ENCODE measurements at regions of chr14 and their contacts with region 1.

Region 1: DNA sequence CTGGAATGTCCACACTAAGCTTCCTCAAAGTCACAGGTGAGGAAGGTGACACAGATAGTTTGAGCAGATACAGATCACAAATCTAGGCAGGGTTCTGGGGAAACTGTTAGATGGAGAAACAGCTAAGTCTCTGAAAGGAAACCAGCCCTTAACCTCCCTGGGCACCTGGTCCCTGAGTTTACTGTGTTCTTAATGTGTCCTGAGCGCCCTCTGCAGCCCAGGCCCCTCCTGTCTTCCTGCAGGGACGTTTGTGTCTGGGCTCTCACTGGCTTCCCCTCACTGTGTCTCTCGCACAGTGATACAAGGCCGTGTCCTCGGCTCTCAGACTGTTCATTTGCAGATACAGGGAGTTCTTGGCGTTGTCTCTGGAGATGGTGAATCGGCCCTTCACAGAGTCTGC is 684.3 kb downstream of the TMEM121 start:
- DNase-seq: peak in 1 of 5 donors; percentile 29
- H3K4me3 ChIP-seq: no peak overlapping the region
- H3K4me3 Mint-ChIP-seq: no peak overlapping the region
- H3K27ac ChIP-seq: no peak overlapping the region
- H3K27ac Mint-ChIP-seq: peak overlapping the region in 1 of 7 donors; percentile 58
- H3K4me1 ChIP-seq: no peaks in the 10 kb centered on the region
- H3K4me1 Mint-ChIP-seq: peaks cover 4 to 14% (median 6%) of the 10 kb centered on the region in 4 donors
- H3K27me3 ChIP-seq: no peaks in the 10 kb centered on the region
- H3K27me3 Mint-ChIP-seq: peaks cover 15 to 16% of the 10 kb centered on the region in 2 donors

Region 2: GRCh38 chr14:106120101-106120500 is 90.6 kb before region 1 on chr14:
- CTCF ChIA-PET with region 1: interaction called, 39 read pairs
- POLR2A ChIA-PET with region 1: interaction called, 4 read pairs
- intact Hi-C with region 1: no loop called
- DNase-seq: no peak
- H3K4me3 ChIP-seq: no peak overlapping the region
- H3K4me3 Mint-ChIP-seq: peak overlapping the region in 6 of 8 donors; percentile 13 to 71 (median 60)
- H3K27ac ChIP-seq: no peak overlapping the region
- H3K27ac Mint-ChIP-seq: peak overlapping the region in 3 of 7 donors; percentile 22 to 64 (median 37)
- H3K4me1 ChIP-seq: peaks cover 21% of the 10 kb centered on the region
- H3K4me1 Mint-ChIP-seq: peaks cover 15 to 44% (median 24%) of the 10 kb centered on the region in 4 donors
- H3K27me3 ChIP-seq: no peaks in the 10 kb centered on the region
- H3K27me3 Mint-ChIP-seq: peaks cover 13 to 17% of the 10 kb centered on the region in 2 donors

Region 3: DNA sequence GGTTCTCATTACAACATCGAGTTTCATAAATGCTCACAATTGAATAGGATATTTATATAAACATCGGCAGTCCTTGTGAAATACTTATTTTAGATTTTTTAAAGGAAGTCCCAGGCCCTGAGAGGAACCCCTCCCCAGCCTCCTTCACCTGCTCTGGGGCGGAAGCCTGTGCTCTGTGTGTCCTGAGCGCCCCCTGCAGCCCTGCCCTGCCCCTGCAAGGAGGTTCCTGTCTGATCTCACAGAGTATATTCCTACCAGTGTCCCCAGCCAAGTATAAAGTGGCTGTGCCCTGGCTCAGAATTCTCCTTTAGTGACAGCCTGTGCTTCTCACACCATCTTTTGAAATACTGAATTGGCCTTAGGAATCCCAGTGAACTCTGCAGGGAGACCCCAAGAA is 24.8 kb before region 1 on chr14:
- CTCF ChIA-PET with region 1: interaction called, 16 read pairs
- POLR2A ChIA-PET with region 1: interaction called, 6 read pairs
- intact Hi-C with region 1: no loop called
- DNase-seq: peak; percentile 70 to 77 (median 73)
- H3K4me3 ChIP-seq: no peak overlapping the region
- H3K4me3 Mint-ChIP-seq: peak overlapping the region in 7 of 8 donors; percentile 19 to 76 (median 58)
- H3K27ac ChIP-seq: peak overlapping the region; percentile 19
- H3K27ac Mint-ChIP-seq: peak overlapping the region; percentile 74 to 95 (median 90)
- H3K4me1 ChIP-seq: peaks cover 40% of the 10 kb centered on the region
- H3K4me1 Mint-ChIP-seq: peaks cover 28 to 54% (median 39%) of the 10 kb centered on the region in 4 donors
- H3K27me3 ChIP-seq: no peaks in the 10 kb centered on the region
- H3K27me3 Mint-ChIP-seq: no peaks in the 10 kb centered on the region

Region 4: GRCh38 chr14:106222731-106223130 is 12.1 kb after region 1 on chr14:
- CTCF ChIA-PET with region 1: interaction called, 127 read pairs
- POLR2A ChIA-PET with region 1: interaction called, 3 read pairs
- intact Hi-C with region 1: no loop called
- DNase-seq: no peak
- H3K4me3 ChIP-seq: no peak overlapping the region
- H3K4me3 Mint-ChIP-seq: peak overlapping the region in 7 of 8 donors; percentile 18 to 46 (median 30)
- H3K27ac ChIP-seq: no peak overlapping the region
- H3K27ac Mint-ChIP-seq: peak overlapping the region in 6 of 7 donors; percentile 33 to 92 (median 58)
- H3K4me1 ChIP-seq: peaks cover 27% of the 10 kb centered on the region
- H3K4me1 Mint-ChIP-seq: peaks cover 17 to 52% (median 34%) of the 10 kb centered on the region in 4 donors
- H3K27me3 ChIP-seq: no peaks in the 10 kb centered on the region
- H3K27me3 Mint-ChIP-seq: peaks cover 1 to 8% of the 10 kb centered on the region in 2 donors

Region 5: GRCh38 chr14:106228541-106229158 is 18.0 kb after region 1 on chr14:
- CTCF ChIA-PET with region 1: interaction called, 127 read pairs
- POLR2A ChIA-PET with region 1: interaction called, 5 read pairs
- intact Hi-C with region 1: no loop called
- DNase-seq: peak; percentile 42 to 62 (median 53)
- H3K4me3 ChIP-seq: peak overlapping the region; percentile 6 to 28
- H3K4me3 Mint-ChIP-seq: peak overlapping the region; percentile 68 to 90 (median 85)
- H3K27ac ChIP-seq: peak overlapping the region; percentile 47
- H3K27ac Mint-ChIP-seq: peak overlapping the region; percentile 68 to 96 (median 93)
- H3K4me1 ChIP-seq: peaks cover 44% of the 10 kb centered on the region
- H3K4me1 Mint-ChIP-seq: peaks cover 24 to 63% (median 47%) of the 10 kb centered on the region in 4 donors
- H3K27me3 ChIP-seq: no peaks in the 10 kb centered on the region
- H3K27me3 Mint-ChIP-seq: peaks cover 0 to 3% of the 10 kb centered on the region in 2 donors

Region 6: DNA sequence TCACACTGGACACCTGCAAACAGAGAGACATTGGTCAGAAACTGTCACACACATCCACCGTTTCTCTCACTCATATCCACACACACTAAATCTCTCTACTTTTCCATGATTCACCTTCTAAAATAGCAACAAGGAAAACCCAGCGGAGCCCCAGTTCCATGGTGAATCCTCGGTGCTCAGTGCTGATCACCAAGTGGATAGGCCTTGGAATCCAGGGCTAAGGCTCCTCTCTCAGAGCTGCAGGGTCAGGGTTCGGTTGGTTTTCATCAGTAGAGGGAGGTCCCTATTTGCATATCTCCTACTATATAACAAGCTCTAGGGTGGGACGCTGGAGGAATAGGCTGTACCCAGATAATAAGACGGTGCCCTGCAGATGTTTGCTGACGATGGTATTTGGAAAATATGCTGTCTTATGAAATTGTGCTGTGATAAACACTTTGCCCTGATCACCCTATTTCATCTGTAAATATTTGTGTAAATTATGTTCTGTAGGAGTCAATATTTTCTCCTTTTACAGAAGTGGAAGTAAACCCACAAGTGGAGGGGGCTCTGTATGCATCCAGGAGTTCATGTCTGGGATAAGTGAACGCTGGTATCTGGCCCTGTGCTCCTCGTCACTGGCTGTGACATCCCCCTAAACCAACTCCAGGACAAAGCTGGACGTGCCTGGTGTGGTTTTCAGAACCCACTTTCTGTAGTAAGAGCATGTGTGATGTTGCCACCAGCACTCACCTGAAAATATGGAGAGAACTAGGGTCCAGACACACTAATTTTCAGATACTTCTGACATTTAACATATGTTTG is 24.9 kb after region 1 on chr14:
- CTCF ChIA-PET with region 1: interaction called, 127 read pairs
- POLR2A ChIA-PET with region 1: interaction called, 4 read pairs
- intact Hi-C with region 1: loop called (anchors 1 kb)
- DNase-seq: no peak
- H3K4me3 ChIP-seq: no peak overlapping the region
- H3K4me3 Mint-ChIP-seq: peak overlapping the region in 1 of 8 donors; percentile 2
- H3K27ac ChIP-seq: no peak overlapping the region
- H3K27ac Mint-ChIP-seq: peak overlapping the region in 2 of 7 donors; percentile 10 to 66
- H3K4me1 ChIP-seq: peaks cover 18% of the 10 kb centered on the region
- H3K4me1 Mint-ChIP-seq: peaks cover 9 to 32% (median 17%) of the 10 kb centered on the region in 4 donors
- H3K27me3 ChIP-seq: no peaks in the 10 kb centered on the region
- H3K27me3 Mint-ChIP-seq: peaks cover 3 to 13% of the 10 kb centered on the region in 2 donors

Measured in CD4-positive, alpha-beta memory T cell (primary cell).